OCI-LY7 (cell line): ENCODE measurements at regions of chr14 and their contacts with region 1.

Region 1: GRCh38 chr14:90399541-90400444 is 3.0 kb downstream of the CALM1 start:
- DNase-seq: peak; percentile 93
- H3K4me3 ChIP-seq: peak overlapping the region; percentile 100
- H3K27ac ChIP-seq: no peak overlapping the region
- H3K4me1 ChIP-seq: peaks cover 20% of the 10 kb centered on the region
- CTCF ChIP-seq: peak; percentile 100

Region 2: GRCh38 chr14:89954070-89955028 is 445.4 kb before region 1 on chr14 and contains the start of gene EFCAB11:
- CTCF ChIA-PET with region 1: no interaction called
- POLR2A ChIA-PET with region 1: no interaction called
- intact Hi-C with region 1: loop called (anchors 5 kb)
- DNase-seq: peak; percentile 98
- H3K4me3 ChIP-seq: peak within 1 kb of the TSS; percentile 76
- H3K27ac ChIP-seq: peak within 1 kb of the TSS; percentile 83
- H3K4me1 ChIP-seq: peaks cover 26% of the 10 kb centered on the region
- CTCF ChIP-seq: peak; percentile 83
- total RNA-seq, gene EFCAB11: 9.3 and 10.7 TPM in 2 replicates

Region 3: DNA sequence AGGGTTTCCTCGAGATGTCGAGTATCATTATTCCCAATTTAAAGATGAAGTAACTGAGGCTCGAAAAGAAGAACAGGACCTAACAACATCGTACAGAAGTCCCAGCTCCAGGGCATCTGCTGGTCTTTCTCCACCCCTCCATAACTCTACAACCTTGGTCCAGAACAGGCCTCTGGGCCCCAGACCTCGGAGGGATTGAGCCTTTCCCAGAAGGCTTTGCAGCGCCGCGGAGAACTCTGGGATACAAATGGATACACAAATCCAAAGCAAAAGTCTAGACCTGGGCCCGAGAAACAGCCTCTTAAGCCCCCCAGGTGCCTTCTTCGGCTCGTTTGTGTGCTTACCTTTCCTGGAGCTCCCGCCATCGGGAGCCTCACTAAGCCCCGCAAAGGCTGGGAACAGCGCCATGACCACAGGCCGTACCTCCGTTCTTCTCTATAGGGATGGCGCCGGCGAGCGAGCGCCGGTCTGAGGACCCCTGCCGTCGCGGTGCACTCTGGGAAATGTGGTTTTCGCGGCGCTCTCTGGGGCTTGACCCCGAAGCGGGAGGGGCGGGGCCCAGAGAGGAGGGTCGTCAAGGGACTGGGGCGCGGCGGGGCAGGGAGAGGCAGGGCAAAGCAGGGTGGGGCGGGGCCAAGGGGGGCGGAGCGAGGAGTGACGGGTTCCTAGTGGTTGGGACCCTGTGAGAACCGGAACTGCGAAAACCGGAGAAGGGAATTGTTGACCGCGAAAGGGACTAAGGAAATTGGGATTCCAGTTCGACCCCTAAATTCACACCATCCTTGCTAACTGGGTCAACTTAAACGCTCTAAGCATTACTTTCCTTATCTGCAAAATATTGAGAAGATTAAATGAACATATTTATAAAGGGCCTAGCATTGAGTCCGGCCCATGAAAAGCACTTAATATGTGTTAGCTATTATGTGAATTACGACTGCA is 68.0 kb before region 1 on chr14 and contains the start of gene NRDE2:
- CTCF ChIA-PET with region 1: no interaction called
- POLR2A ChIA-PET with region 1: no interaction called
- intact Hi-C with region 1: loop called (anchors 1 kb)
- DNase-seq: peak; percentile 98
- H3K4me3 ChIP-seq: peak within 1 kb of the TSS; percentile 89
- H3K27ac ChIP-seq: peak within 1 kb of the TSS; percentile 68
- H3K4me1 ChIP-seq: peaks cover 14% of the 10 kb centered on the region
- CTCF ChIP-seq: no peak
- total RNA-seq, gene NRDE2: 12.3 and 15.4 TPM in 2 replicates

Region 4: GRCh38 chr14:90697577-90698206 is 297.9 kb after region 1 on chr14:
- CTCF ChIA-PET with region 1: interaction called, 5 read pairs
- POLR2A ChIA-PET with region 1: no interaction called
- intact Hi-C with region 1: loop called (anchors 1 kb)
- DNase-seq: peak; percentile 73
- H3K4me3 ChIP-seq: no peak overlapping the region
- H3K27ac ChIP-seq: no peak overlapping the region
- H3K4me1 ChIP-seq: peaks cover 3% of the 10 kb centered on the region
- CTCF ChIP-seq: peak; percentile 95

Region 5: GRCh38 chr14:91060351-91061055 is 660.7 kb after region 1 on chr14 and contains the start of gene RPS6KA5:
- CTCF ChIA-PET with region 1: no interaction called
- POLR2A ChIA-PET with region 1: no interaction called
- intact Hi-C with region 1: loop called (anchors 5 kb)
- DNase-seq: peak; percentile 100
- H3K4me3 ChIP-seq: peak within 1 kb of the TSS; percentile 83
- H3K27ac ChIP-seq: peak within 1 kb of the TSS; percentile 78
- H3K4me1 ChIP-seq: peaks cover 32% of the 10 kb centered on the region
- CTCF ChIP-seq: no peak
- total RNA-seq, gene RPS6KA5: 9.0 and 9.6 TPM in 2 replicates